ENCODE measurements at regions of chr18 and their contacts with region 1.

Region 1: DNA sequence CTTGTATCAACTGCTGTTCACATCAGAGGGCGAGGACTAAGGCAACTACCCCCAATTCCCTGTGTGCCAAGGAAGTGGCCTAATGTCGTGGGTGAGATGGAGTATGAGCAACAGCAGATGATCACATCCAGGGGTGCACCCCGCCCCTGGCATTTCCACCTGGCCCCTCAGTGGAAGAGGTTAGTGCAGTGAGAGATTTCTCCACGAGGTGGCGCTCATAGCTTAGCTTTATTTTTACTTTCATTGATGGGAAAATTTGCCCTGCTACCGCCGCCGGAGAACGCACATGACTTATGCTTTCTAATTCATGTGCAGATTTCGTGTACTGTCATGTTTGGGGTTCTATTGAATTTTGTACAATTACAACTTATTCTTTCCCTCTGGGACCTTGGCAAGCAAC is 470.6 kb upstream of the MEX3C start:
- DNase-seq: peak; percentile 63 to 82
- H3K4me3 ChIP-seq: no peak overlapping the region
- H3K4me1 ChIP-seq: no peaks in the 10 kb centered on the region
- H3K27me3 ChIP-seq: no peaks in the 10 kb centered on the region

Region 2: DNA sequence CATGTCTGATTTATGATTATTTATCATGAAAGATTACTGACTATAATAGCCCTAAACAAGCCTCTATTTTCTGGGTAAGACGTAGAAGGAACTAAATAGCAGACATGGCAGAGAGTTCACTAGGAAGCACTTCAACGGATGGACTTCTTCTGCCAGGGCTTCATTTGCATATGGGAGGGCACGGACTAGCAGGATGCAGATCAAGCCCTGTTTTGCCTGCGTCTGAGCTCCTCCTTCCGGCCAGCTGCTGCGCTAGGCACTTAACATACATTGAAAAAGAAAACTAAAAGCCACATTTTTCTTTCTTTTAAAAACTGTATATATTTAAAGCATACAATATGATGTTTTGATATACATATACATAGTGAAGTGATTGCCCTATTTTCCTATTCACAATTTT is 130.6 kb before region 1 on chr18:
- in situ Hi-C with region 1: no loop called
- DNase-seq: peak in 1 of 2 experiments; percentile 9
- H3K4me3 ChIP-seq: no peak overlapping the region
- H3K4me1 ChIP-seq: no peaks in the 10 kb centered on the region
- H3K27me3 ChIP-seq: no peaks in the 10 kb centered on the region

Region 3: GRCh38 chr18:51802569-51803428 is 134.7 kb after region 1 on chr18:
- in situ Hi-C with region 1: no loop called
- DNase-seq: no peak
- H3K4me3 ChIP-seq: no peak overlapping the region
- H3K4me1 ChIP-seq: no peaks in the 10 kb centered on the region
- H3K27me3 ChIP-seq: no peaks in the 10 kb centered on the region

Region 4: DNA sequence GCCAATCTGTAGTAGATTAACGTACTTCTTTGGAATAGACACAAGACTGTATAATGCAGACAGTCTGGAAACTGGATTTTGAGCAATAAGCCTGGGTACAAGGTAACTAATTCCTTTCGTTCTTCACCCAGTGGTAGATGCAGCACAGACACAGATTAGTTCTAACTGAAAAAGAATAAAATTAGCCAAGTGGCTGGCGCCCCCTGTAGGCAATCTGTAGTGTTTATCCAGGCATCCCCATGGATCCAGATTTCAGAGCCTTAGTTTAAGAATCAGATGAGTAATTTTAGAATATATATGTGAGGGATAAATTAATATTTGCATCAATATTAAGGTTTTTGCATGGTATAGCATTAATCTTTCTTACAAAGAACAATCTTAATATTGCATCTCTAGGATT is 1235.8 kb after region 1 on chr18:
- in situ Hi-C with region 1: loop called (anchors 25 kb)
- DNase-seq: peak in 1 of 2 experiments; percentile 56
- H3K4me3 ChIP-seq: no peak overlapping the region
- H3K4me1 ChIP-seq: no peaks in the 10 kb centered on the region
- H3K27me3 ChIP-seq: no peaks in the 10 kb centered on the region

Measured in HAP-1 (cell line).